Heart left ventricle (tissue), 16 donors: ENCODE measurements at regions of chr11 and their contacts with region 1.

Region 1: DNA sequence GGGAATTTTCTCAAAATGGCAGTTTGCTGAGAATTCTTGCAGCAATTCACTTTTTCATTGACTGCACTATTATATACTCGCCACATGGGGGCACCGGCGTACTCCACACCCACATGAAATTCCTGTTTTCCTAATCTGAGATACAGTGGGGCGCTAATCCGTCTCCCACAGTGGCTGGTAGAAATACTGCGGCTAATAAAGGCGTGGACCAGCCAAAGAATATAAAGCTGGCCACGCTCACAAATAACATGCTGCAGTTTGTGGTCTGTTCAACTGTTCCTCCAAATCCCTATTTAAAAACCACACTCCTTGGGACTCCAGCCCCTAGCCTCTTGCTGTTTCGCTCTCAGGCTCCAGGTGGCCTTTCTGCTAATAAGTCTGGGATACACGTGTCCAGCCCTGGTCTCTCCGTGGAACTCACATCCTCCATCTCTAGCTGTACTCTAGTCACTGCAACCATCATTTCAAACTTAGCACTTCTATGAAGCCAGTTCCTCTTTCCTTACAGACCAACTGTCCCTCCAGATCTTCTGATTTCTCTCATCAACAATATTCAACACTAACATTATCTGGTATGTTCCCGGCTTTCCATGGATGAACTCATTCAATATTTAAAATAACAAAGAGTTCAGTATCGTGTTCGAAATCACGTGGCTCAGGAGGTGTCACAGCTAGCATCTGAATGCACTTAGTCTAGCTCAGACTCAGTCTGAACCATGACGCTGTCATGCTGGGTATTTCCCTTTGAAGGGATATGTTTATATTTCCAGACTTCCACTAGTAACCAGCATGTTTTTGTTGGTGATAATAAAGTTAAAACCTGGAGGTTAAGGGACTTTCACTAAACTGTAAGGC is 22.0 kb downstream of the TBRG1 start:
- DNase-seq: peak in 4 of 5 donors; percentile 33 to 45 (median 43)
- ATAC-seq: peak; percentile 58 to 88 (median 82)
- H3K4me3 ChIP-seq: peak overlapping the region in 6 of 12 donors; percentile 0 to 40 (median 22)
- H3K27ac ChIP-seq: peak overlapping the region in 1 of 12 donors; percentile 35
- H3K4me1 ChIP-seq: peaks cover 0 to 12% (median 2%) of the 10 kb centered on the region in 12 donors
- H3K27me3 ChIP-seq: no peaks in the 10 kb centered on the region
- CTCF ChIP-seq: peak; percentile 65 to 88 (median 81)
- POLR2A ChIP-seq: no peak

Region 2: DNA sequence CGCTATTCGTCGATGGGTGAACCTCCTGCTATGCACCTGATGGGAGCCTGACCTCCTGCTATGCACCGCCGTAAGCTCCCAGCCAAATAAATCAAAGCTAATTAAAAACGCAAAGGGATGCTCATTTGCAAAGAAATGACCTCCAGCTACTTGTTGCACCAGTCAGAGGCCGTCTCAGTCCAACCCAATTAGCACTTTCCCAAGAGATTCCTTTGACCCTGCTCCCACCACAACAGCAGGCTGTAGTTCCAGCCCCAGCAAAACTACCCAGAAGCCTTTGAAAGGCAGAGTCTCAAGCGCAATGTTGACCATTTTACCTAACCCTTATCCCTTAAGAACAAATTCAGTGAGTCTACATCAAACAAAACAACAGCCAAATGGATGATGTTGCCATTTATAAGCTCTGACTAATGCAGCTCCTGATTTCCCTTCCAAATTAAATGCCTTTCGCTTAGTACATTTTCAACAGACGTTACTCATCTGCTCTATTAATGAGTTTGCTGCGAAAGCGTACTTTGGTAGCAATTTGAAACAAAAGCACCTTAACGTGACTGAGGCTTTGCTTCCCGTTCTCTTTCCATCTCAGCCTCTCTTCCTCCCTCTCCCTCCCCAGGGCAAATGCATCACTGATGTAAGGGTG is 1645.8 kb before region 1 on chr11:
- intact Hi-C with region 1: no loop called
- DNase-seq: no peak
- ATAC-seq: no peak
- H3K4me3 ChIP-seq: no peak overlapping the region
- H3K27ac ChIP-seq: no peak overlapping the region
- H3K4me1 ChIP-seq: no peaks in the 10 kb centered on the region
- H3K27me3 ChIP-seq: peaks cover 0 to 41% (median 10%) of the 10 kb centered on the region in 9 donors
- CTCF ChIP-seq: no peak
- POLR2A ChIP-seq: no peak

Region 3: DNA sequence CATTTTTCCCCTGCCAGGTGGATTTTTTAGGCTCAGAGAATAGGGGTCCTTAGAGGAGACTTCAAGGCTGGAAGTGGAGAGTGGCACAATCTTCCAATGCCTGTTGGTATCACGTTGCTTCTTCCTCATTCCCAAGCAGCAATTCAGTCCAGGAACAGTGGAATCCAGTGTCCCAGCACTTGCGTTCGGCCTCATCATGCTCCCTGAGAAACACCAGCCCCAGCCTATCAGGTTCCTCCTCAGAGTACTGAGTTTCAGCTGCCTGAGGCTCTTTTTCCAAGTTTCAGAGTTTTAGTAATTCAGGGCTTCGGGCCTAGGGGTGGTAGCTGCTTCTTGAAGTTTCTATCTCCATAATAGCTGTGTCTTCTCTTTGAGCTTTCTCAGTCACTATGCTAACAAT is 63.2 kb after region 1 on chr11:
- intact Hi-C with region 1: no loop called
- DNase-seq: no peak
- ATAC-seq: no peak
- H3K4me3 ChIP-seq: no peak overlapping the region
- H3K27ac ChIP-seq: no peak overlapping the region
- H3K4me1 ChIP-seq: no peaks in the 10 kb centered on the region
- H3K27me3 ChIP-seq: peaks cover 0 to 7% (median 0%) of the 10 kb centered on the region in 9 donors
- CTCF ChIP-seq: no peak
- POLR2A ChIP-seq: no peak

Region 4: GRCh38 chr11:124829986-124830385 is 185.3 kb after region 1 on chr11:
- intact Hi-C with region 1: loop called in 7 of 10 experiments (anchors 5 kb)
- DNase-seq: no peak
- ATAC-seq: no peak
- H3K4me3 ChIP-seq: no peak overlapping the region
- H3K27ac ChIP-seq: no peak overlapping the region
- H3K4me1 ChIP-seq: no peaks in the 10 kb centered on the region
- H3K27me3 ChIP-seq: peaks cover 0 to 14% (median 0%) of the 10 kb centered on the region in 9 donors
- CTCF ChIP-seq: no peak
- POLR2A ChIP-seq: no peak

Region 5: GRCh38 chr11:124837491-124837856 is 192.8 kb after region 1 on chr11:
- intact Hi-C with region 1: loop called (anchors 1 to 5 kb)
- DNase-seq: peak in 1 of 5 donors; percentile 26
- ATAC-seq: peak in 3 of 4 donors; percentile 53 to 71 (median 69)
- H3K4me3 ChIP-seq: no peak overlapping the region
- H3K27ac ChIP-seq: no peak overlapping the region
- H3K4me1 ChIP-seq: peaks cover 6 to 20% (median 15%) of the 10 kb centered on the region in 12 donors
- H3K27me3 ChIP-seq: peaks cover 23 to 70% (median 45%) of the 10 kb centered on the region in 9 donors
- CTCF ChIP-seq: peak in 1 of 12 donors; percentile 20
- POLR2A ChIP-seq: no peak